Common myeloid progenitor, CD34-positive (primary cell): ENCODE measurements at regions of chr3 and their contacts with region 1.

Region 1: DNA sequence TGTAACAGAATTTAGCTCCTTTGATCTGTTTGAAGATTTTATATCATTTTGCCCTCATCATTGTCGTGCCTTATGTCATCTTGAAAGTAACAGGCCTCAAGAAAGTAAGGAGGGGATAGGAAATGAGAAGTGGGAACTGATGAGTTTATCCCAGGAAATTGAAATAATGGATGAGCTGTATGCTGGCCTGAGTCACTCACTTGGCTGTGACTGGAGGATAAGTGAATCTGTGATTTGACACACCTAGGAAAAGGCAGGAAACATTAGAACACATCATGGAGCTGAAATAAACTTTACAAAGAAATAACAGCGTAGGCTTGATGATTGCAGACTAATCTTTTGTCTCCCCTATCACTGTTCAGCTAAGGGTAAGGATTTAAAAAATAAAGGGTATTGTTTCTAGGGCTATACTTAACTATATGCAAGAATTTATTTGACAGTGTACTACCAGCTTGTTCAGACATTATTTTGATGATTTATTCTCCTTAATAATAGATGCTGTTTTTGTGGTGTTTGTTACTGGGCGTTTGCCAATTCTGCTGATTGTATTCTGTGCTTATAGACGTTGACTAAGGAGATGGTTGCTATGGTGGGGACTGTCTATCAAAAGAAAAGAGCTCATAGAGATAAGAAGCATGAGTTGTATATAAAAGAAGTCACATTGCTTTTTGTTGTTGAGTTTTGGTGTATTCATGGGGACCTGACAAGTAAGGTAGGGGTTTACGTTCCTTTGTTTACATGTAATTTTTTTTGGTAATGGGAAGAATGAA is 105.6 kb upstream of the ROPN1 start:
- DNase-seq: no peak
- H3K4me3 ChIP-seq: no peak overlapping the region
- H3K27ac ChIP-seq: no peak overlapping the region
- H3K4me1 ChIP-seq: no peaks in the 10 kb centered on the region
- H3K27me3 ChIP-seq: peaks cover 2 to 19% (median 11%) of the 10 kb centered on the region in 5 experiments

Region 2: GRCh38 chr3:124059580-124059979 is 38.0 kb before region 1 on chr3:
- CTCF ChIA-PET with region 1: no interaction called
- POLR2A ChIA-PET with region 1: no interaction called
- DNase-seq: no peak
- H3K4me3 ChIP-seq: no peak overlapping the region
- H3K27ac ChIP-seq: no peak overlapping the region
- H3K4me1 ChIP-seq: no peaks in the 10 kb centered on the region
- H3K27me3 ChIP-seq: peaks cover 0 to 17% (median 0%) of the 10 kb centered on the region in 5 experiments

Region 3: DNA sequence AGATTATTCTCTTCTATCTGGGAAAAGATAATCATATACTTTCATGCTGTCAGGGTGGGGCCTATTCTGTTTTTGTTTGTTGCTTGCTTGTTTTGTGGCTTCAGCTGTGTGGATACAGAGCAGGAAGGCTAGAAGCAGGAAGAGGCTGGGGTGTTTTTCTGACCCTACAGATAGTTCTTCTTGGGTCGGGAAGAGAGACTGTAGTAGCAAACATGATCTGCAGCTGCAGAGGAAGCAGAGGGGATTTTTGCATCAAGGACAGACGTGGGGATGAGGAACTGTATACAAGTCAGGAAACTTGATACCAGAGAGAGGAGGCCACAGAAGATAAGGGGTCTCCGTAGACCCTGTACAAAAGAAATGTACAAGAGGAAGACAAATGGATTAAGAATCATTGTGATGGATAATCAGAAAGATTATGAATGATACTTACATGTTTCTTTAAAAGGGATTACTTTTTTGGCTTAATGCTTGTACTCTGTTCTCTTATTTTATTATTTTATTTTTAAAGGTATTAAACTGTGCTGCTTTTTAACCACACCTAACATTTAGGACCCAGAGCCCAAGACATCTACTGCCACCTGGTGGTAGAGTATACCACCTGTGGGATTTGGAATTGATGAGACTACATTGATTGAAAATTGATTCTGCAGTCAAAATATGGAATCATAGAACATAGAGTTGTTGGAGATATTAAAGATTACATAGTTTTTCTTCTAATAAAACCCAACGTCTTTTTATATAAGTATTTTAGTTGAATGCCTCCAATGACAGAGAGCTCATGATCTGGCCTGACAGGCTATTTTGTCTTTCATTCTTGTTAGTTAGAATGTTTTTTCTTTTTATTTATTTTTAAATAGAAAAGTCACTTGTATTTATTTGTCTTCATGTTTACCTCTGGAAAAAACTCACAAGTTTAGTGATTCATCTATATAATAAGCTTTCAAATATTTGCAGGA is 18.3 kb before region 1 on chr3:
- CTCF ChIA-PET with region 1: interaction called, 11 read pairs
- POLR2A ChIA-PET with region 1: no interaction called
- DNase-seq: peak; percentile 36 to 62 (median 58)
- H3K4me3 ChIP-seq: no peak overlapping the region
- H3K27ac ChIP-seq: no peak overlapping the region
- H3K4me1 ChIP-seq: peaks cover 0 to 3% (median 0%) of the 10 kb centered on the region in 4 experiments
- H3K27me3 ChIP-seq: peaks cover 0 to 2% (median 2%) of the 10 kb centered on the region in 5 experiments

Region 4: GRCh38 chr3:124115279-124115678 is 17.7 kb after region 1 on chr3:
- CTCF ChIA-PET with region 1: no interaction called
- POLR2A ChIA-PET with region 1: no interaction called
- DNase-seq: no peak
- H3K4me3 ChIP-seq: no peak overlapping the region
- H3K27ac ChIP-seq: no peak overlapping the region
- H3K4me1 ChIP-seq: no peaks in the 10 kb centered on the region
- H3K27me3 ChIP-seq: peaks cover 0 to 2% (median 0%) of the 10 kb centered on the region in 5 experiments